B cell (primary cell): ENCODE measurements at regions of chr1 and their contacts with region 1.

Region 1: GRCh38 chr1:101051688-101052638 is 26.4 kb upstream of the DPH5 start:
- DNase-seq: peak; percentile 75
- ATAC-seq: peak; percentile 83
- H3K4me3 ChIP-seq: peak overlapping the region in 4 of 5 experiments; percentile 2 to 41 (median 22)
- H3K4me3 Mint-ChIP-seq: peak overlapping the region; percentile 81
- H3K27ac ChIP-seq: peak overlapping the region; percentile 78 to 80
- H3K27ac Mint-ChIP-seq: peak overlapping the region; percentile 80
- H3K4me1 ChIP-seq: peaks cover 37 to 41% of the 10 kb centered on the region in 2 donors
- H3K4me1 Mint-ChIP-seq: peaks cover 57% of the 10 kb centered on the region
- H3K27me3 ChIP-seq: no peaks in the 10 kb centered on the region
- H3K27me3 Mint-ChIP-seq: no peaks in the 10 kb centered on the region
- CTCF ChIP-seq: no peak

Region 2: GRCh38 chr1:101025657-101026504 is 26.1 kb before region 1 on chr1 and contains the start of gene DPH5:
- CTCF ChIA-PET with region 1: no interaction called
- POLR2A ChIA-PET with region 1: no interaction called
- intact Hi-C with region 1: loop called (anchors 2 kb)
- DNase-seq: peak; percentile 90
- ATAC-seq: peak; percentile 96
- H3K4me3 ChIP-seq: peak within 1 kb of the TSS; percentile 81 to 97 (median 92)
- H3K4me3 Mint-ChIP-seq: peak within 1 kb of the TSS; percentile 98
- H3K27ac ChIP-seq: peak within 1 kb of the TSS; percentile 78 to 85
- H3K27ac Mint-ChIP-seq: peak within 1 kb of the TSS; percentile 97
- H3K4me1 ChIP-seq: peaks cover 45 to 47% of the 10 kb centered on the region in 2 donors
- H3K4me1 Mint-ChIP-seq: peaks cover 50% of the 10 kb centered on the region
- H3K27me3 ChIP-seq: no peaks in the 10 kb centered on the region
- H3K27me3 Mint-ChIP-seq: no peaks in the 10 kb centered on the region
- CTCF ChIP-seq: no peak
- total RNA-seq, gene DPH5: 39.4 and 42.5 TPM in 2 replicates

Region 3: DNA sequence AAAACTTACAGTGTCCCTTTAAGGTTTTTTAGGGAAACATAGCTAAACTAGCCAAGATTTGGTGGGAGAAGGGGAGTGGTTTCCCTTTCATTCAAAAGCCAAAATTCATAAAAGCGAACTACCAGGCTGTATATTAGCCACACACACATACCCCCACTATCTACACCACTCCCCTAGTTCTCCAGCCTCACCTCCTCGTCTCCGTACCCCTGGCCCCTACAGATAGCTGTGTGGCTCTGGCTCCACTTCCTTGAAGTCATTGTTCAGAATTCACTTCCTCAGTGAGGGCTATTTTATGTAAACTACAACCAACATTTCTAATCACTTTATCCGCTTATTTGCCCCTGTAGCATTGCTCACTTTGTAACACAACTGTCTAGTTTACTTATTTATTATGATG is 21.1 kb before region 1 on chr1:
- CTCF ChIA-PET with region 1: no interaction called
- POLR2A ChIA-PET with region 1: interaction called, 12 read pairs
- intact Hi-C with region 1: no loop called
- DNase-seq: no peak
- ATAC-seq: no peak
- H3K4me3 ChIP-seq: no peak overlapping the region
- H3K4me3 Mint-ChIP-seq: peak overlapping the region; percentile 14
- H3K27ac ChIP-seq: peak overlapping the region in 1 of 2 donors; percentile 55
- H3K27ac Mint-ChIP-seq: peak overlapping the region; percentile 47
- H3K4me1 ChIP-seq: peaks cover 39 to 68% of the 10 kb centered on the region in 2 donors
- H3K4me1 Mint-ChIP-seq: peaks cover 70% of the 10 kb centered on the region
- H3K27me3 ChIP-seq: no peaks in the 10 kb centered on the region
- H3K27me3 Mint-ChIP-seq: no peaks in the 10 kb centered on the region
- CTCF ChIP-seq: no peak

Region 4: DNA sequence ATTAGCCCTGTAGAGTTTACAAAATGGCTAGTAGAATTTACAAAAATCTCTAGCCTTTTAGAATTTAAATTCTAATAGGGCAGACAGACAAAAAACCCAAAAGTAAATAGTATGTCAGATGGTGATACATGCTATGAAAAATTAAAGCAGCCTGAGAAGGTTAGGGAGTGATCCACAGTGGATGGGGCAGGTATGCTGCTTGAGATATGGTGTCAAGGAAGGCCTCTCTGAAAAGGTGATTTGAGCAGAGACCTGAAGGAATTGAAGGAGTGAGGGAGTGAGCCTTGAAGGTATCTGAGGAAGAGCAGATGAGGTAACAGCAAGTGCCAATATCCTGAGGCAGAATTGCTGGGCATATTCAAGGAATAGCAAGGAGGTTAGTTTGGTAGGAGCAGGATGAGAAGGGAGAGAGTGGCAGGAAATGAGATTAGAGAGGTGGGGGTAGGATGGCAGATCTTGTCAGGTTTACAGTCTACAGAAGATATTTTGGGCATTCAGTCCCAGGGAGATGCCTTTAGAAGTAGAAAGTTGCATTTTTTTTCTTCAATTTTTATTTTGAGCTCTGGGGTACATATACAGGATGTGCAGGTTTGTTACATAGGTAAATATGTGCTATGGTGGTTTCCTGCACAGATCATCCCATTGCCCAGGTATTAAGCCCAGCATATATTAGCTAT is 14.4 kb after region 1 on chr1:
- CTCF ChIA-PET with region 1: interaction called, 5 read pairs
- POLR2A ChIA-PET with region 1: interaction called, 3 read pairs
- intact Hi-C with region 1: loop called (anchors 1 kb)
- DNase-seq: no peak
- ATAC-seq: no peak
- H3K4me3 ChIP-seq: no peak overlapping the region
- H3K4me3 Mint-ChIP-seq: peak overlapping the region; percentile 52
- H3K27ac ChIP-seq: peak overlapping the region; percentile 52 to 88
- H3K27ac Mint-ChIP-seq: peak overlapping the region; percentile 92
- H3K4me1 ChIP-seq: peaks cover 45 to 58% of the 10 kb centered on the region in 2 donors
- H3K4me1 Mint-ChIP-seq: peaks cover 64% of the 10 kb centered on the region
- H3K27me3 ChIP-seq: no peaks in the 10 kb centered on the region
- H3K27me3 Mint-ChIP-seq: no peaks in the 10 kb centered on the region
- CTCF ChIP-seq: no peak

Region 5: GRCh38 chr1:101112051-101112780 is 60.3 kb after region 1 on chr1:
- CTCF ChIA-PET with region 1: no interaction called
- POLR2A ChIA-PET with region 1: no interaction called
- intact Hi-C with region 1: loop called (anchors 1 kb)
- DNase-seq: peak; percentile 90
- ATAC-seq: peak; percentile 95
- H3K4me3 ChIP-seq: peak overlapping the region in 1 of 5 experiments; percentile 14
- H3K4me3 Mint-ChIP-seq: peak overlapping the region; percentile 79
- H3K27ac ChIP-seq: peak overlapping the region; percentile 80 to 95
- H3K27ac Mint-ChIP-seq: peak overlapping the region; percentile 89
- H3K4me1 ChIP-seq: peaks cover 28 to 31% of the 10 kb centered on the region in 2 donors
- H3K4me1 Mint-ChIP-seq: peaks cover 39% of the 10 kb centered on the region
- H3K27me3 ChIP-seq: no peaks in the 10 kb centered on the region
- H3K27me3 Mint-ChIP-seq: no peaks in the 10 kb centered on the region
- CTCF ChIP-seq: peak; percentile 32

Region 6: GRCh38 chr1:101128211-101128727 is 76.3 kb after region 1 on chr1:
- CTCF ChIA-PET with region 1: no interaction called
- POLR2A ChIA-PET with region 1: no interaction called
- intact Hi-C with region 1: loop called (anchors 1 kb)
- DNase-seq: peak; percentile 75
- ATAC-seq: peak; percentile 93
- H3K4me3 ChIP-seq: peak overlapping the region in 3 of 5 experiments; percentile 37 to 59 (median 40)
- H3K4me3 Mint-ChIP-seq: peak overlapping the region; percentile 57
- H3K27ac ChIP-seq: peak overlapping the region; percentile 59 to 74
- H3K27ac Mint-ChIP-seq: peak overlapping the region; percentile 83
- H3K4me1 ChIP-seq: peaks cover 30 to 49% of the 10 kb centered on the region in 2 donors
- H3K4me1 Mint-ChIP-seq: peaks cover 60% of the 10 kb centered on the region
- H3K27me3 ChIP-seq: no peaks in the 10 kb centered on the region
- H3K27me3 Mint-ChIP-seq: no peaks in the 10 kb centered on the region
- CTCF ChIP-seq: no peak

Region 7: DNA sequence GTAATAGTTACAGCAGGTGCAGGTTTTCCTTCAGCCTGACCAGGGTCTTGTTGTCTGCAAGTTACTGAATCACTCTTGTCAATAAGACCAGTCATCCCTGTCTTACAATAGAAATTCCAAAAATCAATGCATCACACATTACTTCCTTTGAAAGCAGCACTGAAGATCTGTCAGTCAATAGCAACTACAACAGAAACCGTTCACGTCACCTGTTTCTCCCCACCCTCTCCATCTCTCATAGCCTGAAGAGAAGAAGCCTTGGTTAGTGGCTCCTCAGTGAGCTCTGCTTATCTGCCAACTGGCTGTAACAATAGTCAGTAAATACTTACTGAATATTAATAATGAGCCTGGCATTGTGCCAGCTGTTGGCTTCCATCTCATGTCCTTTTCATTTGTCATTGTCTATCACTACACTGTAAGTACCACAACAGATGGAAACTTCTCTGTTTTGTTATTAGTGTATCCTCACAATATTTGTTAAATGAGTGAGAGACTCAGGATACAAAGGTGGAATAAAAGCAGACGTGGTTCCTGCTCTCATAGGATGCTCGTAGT is 380.1 kb after region 1 on chr1:
- CTCF ChIA-PET with region 1: no interaction called
- POLR2A ChIA-PET with region 1: interaction called, 10 read pairs
- intact Hi-C with region 1: no loop called
- DNase-seq: no peak
- ATAC-seq: no peak
- H3K4me3 ChIP-seq: no peak overlapping the region
- H3K4me3 Mint-ChIP-seq: no peak overlapping the region
- H3K27ac ChIP-seq: no peak overlapping the region
- H3K27ac Mint-ChIP-seq: no peak overlapping the region
- H3K4me1 ChIP-seq: peaks cover 18 to 21% of the 10 kb centered on the region in 2 donors
- H3K4me1 Mint-ChIP-seq: peaks cover 18% of the 10 kb centered on the region
- H3K27me3 ChIP-seq: no peaks in the 10 kb centered on the region
- H3K27me3 Mint-ChIP-seq: no peaks in the 10 kb centered on the region
- CTCF ChIP-seq: no peak